Common myeloid progenitor, CD34-positive (primary cell): ENCODE measurements at regions of chr5 and their contacts with region 1.

Region 1: GRCh38 chr5:137778772-137779564 is 24.8 kb upstream of the HNRNPA0 start:
- DNase-seq: peak; percentile 40 to 64 (median 52)
- H3K4me3 ChIP-seq: no peak overlapping the region
- H3K27ac ChIP-seq: no peak overlapping the region
- H3K4me1 ChIP-seq: peaks cover 0 to 4% (median 0%) of the 10 kb centered on the region in 4 experiments
- H3K27me3 ChIP-seq: no peaks in the 10 kb centered on the region

Region 2: GRCh38 chr5:137629646-137630045 is 149.3 kb before region 1 on chr5:
- CTCF ChIA-PET with region 1: interaction called, 13 read pairs
- POLR2A ChIA-PET with region 1: no interaction called
- DNase-seq: peak; percentile 52 to 78 (median 72)
- H3K4me3 ChIP-seq: peak overlapping the region in 1 of 7 experiments; percentile 67
- H3K27ac ChIP-seq: no peak overlapping the region
- H3K4me1 ChIP-seq: peaks cover 0 to 10% (median 5%) of the 10 kb centered on the region in 4 experiments
- H3K27me3 ChIP-seq: no peaks in the 10 kb centered on the region

Region 3: DNA sequence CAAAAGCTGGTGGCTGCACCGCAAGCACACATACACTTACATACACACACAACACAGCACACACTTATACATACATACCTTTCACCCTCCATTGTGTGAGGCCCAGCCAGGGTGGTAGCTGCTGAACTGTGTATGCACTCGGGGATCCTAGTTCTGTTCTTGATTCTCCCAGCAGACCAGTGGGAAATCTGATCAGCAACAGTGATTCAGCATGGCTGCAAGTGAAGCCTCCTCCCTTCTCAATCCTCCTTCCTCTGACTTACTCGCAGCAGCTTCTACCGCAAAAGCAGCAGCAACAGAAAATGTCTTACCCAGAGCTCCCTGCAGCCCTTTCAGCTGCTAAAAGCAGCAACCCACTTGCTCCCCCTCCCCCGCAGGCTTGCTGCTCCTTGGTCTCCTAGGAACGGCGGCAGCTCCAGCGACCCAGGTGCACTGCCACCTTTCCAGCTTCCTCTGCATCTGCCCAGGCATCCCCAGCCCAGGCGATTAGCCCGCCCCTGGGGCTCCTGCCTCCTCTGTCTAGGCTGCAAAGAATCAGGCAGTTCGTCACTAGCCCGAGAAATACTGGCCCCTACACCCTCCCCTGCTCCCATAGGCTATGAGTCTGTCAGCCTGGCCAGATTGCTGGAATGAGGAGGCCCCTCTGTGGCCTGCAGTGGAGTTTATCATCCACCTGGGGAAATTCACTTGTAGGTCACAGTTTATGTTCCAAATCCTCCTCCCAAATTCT is 43.2 kb before region 1 on chr5 and contains the start of gene KLHL3:
- CTCF ChIA-PET with region 1: no interaction called
- POLR2A ChIA-PET with region 1: no interaction called
- DNase-seq: peak in 2 of 3 donors; percentile 69 to 83
- H3K4me3 ChIP-seq: peak within 1 kb of the TSS; percentile 28 to 92 (median 74)
- H3K27ac ChIP-seq: peak within 1 kb of the TSS in 1 of 2 experiments; percentile 11
- H3K4me1 ChIP-seq: peaks cover 26 to 61% (median 38%) of the 10 kb centered on the region in 4 experiments
- H3K27me3 ChIP-seq: no peaks in the 10 kb centered on the region

Region 4: DNA sequence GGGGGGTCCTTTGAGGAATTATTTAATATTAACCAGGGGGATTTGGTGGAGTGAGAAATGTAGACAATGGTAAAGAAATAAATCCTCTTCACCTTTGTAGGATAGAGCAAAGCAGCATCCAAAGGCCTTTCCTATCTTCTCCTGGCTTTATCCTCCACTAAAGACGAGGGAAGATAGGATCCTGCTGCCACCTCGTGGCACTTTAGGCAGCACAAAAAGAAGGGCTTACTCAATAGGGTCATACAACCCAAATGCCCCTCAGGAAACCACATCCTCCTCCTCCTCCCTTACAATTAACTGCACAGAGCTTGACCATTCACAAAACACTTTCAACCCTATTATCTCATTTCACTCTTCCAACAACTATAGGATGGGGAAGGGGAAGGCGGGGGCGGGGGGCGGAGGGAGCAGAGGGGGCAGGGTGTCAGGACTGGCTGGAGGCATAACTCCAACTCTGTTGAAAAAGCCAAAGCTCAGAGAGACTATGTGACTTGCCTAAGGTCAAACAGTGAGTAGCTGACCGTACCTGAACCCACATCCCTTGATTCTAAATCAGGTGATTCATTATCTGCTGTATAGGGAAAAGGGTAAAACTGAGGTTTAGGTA is 43.3 kb after region 1 on chr5:
- CTCF ChIA-PET with region 1: interaction called, 11 read pairs
- POLR2A ChIA-PET with region 1: no interaction called
- DNase-seq: peak; percentile 19 to 55 (median 34)
- H3K4me3 ChIP-seq: no peak overlapping the region
- H3K27ac ChIP-seq: no peak overlapping the region
- H3K4me1 ChIP-seq: no peaks in the 10 kb centered on the region
- H3K27me3 ChIP-seq: no peaks in the 10 kb centered on the region